Caco-2 (cell line): ENCODE measurements at regions of chr15 and their contacts with region 1.

Region 1: GRCh38 chr15:75182187-75183131 is 19.2 kb upstream of the C15orf39 start:
- DNase-seq: peak; percentile 60 to 82
- H3K4me3 ChIP-seq: no peak overlapping the region
- H3K4me3 Mint-ChIP-seq: peak overlapping the region; percentile 59
- H3K27ac Mint-ChIP-seq: peak overlapping the region; percentile 83
- H3K4me1 ChIP-seq: peaks cover 59% of the 10 kb centered on the region
- H3K4me1 Mint-ChIP-seq: peaks cover 42% of the 10 kb centered on the region
- H3K27me3 ChIP-seq: no peaks in the 10 kb centered on the region
- H3K27me3 Mint-ChIP-seq: no peaks in the 10 kb centered on the region
- CTCF ChIP-seq: peak; percentile 23 to 40

Region 2: GRCh38 chr15:75023181-75023871 is 159.1 kb before region 1 on chr15 and contains the start of gene PPCDC:
- CTCF ChIA-PET with region 1: no interaction called
- POLR2A ChIA-PET with region 1: interaction called, 16 read pairs
- intact Hi-C with region 1: no loop called
- DNase-seq: peak; percentile 96 to 97
- H3K4me3 ChIP-seq: peak within 1 kb of the TSS; percentile 94
- H3K4me3 Mint-ChIP-seq: peak within 1 kb of the TSS; percentile 97
- H3K27ac Mint-ChIP-seq: peak within 1 kb of the TSS; percentile 99
- H3K4me1 ChIP-seq: no peaks in the 10 kb centered on the region
- H3K4me1 Mint-ChIP-seq: no peaks in the 10 kb centered on the region
- H3K27me3 ChIP-seq: no peaks in the 10 kb centered on the region
- H3K27me3 Mint-ChIP-seq: no peaks in the 10 kb centered on the region
- CTCF ChIP-seq: no peak
- total RNA-seq, gene PPCDC: 14.7 and 18.1 TPM in 2 replicates

Region 3: DNA sequence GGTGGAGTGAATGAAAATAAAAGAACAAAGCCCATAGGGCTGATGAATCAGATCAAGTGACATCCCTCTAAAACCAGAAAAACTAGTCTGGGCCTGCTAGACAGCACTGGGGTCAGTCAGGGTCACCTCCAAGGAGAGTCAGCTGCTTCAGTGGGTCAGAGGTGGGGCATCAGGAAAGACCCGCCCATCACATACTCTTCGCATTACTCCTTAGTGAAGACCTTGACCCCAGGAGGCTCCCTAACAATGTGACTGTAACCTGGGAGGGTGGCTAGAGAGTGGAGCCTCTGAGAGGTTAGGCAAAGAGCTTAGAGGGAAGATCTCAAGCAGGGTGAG is 146.2 kb before region 1 on chr15:
- CTCF ChIA-PET with region 1: no interaction called
- POLR2A ChIA-PET with region 1: no interaction called
- intact Hi-C with region 1: loop called (anchors 1 kb)
- DNase-seq: peak; percentile 93 to 96
- H3K4me3 ChIP-seq: no peak overlapping the region
- H3K4me3 Mint-ChIP-seq: peak overlapping the region; percentile 25
- H3K27ac Mint-ChIP-seq: peak overlapping the region; percentile 75
- H3K4me1 ChIP-seq: peaks cover 66% of the 10 kb centered on the region
- H3K4me1 Mint-ChIP-seq: peaks cover 50% of the 10 kb centered on the region
- H3K27me3 ChIP-seq: no peaks in the 10 kb centered on the region
- H3K27me3 Mint-ChIP-seq: no peaks in the 10 kb centered on the region
- CTCF ChIP-seq: no peak

Region 4: GRCh38 chr15:75104804-75105535 is 77.5 kb before region 1 on chr15:
- CTCF ChIA-PET with region 1: no interaction called
- POLR2A ChIA-PET with region 1: no interaction called
- intact Hi-C with region 1: no loop called
- DNase-seq: peak in 1 of 2 experiments; percentile 29
- H3K4me3 ChIP-seq: no peak overlapping the region
- H3K4me3 Mint-ChIP-seq: no peak overlapping the region
- H3K27ac Mint-ChIP-seq: peak overlapping the region; percentile 47
- H3K4me1 ChIP-seq: peaks cover 9% of the 10 kb centered on the region
- H3K4me1 Mint-ChIP-seq: peaks cover 14% of the 10 kb centered on the region
- H3K27me3 ChIP-seq: no peaks in the 10 kb centered on the region
- H3K27me3 Mint-ChIP-seq: no peaks in the 10 kb centered on the region
- CTCF ChIP-seq: no peak

Region 5: GRCh38 chr15:75138016-75138999 is 44.2 kb before region 1 on chr15:
- CTCF ChIA-PET with region 1: no interaction called
- POLR2A ChIA-PET with region 1: interaction called, 6 read pairs
- intact Hi-C with region 1: loop called (anchors 2 kb)
- DNase-seq: peak; percentile 40 to 67
- H3K4me3 ChIP-seq: no peak overlapping the region
- H3K4me3 Mint-ChIP-seq: no peak overlapping the region
- H3K27ac Mint-ChIP-seq: peak overlapping the region; percentile 92
- H3K4me1 ChIP-seq: peaks cover 43% of the 10 kb centered on the region
- H3K4me1 Mint-ChIP-seq: peaks cover 30% of the 10 kb centered on the region
- H3K27me3 ChIP-seq: no peaks in the 10 kb centered on the region
- H3K27me3 Mint-ChIP-seq: no peaks in the 10 kb centered on the region
- CTCF ChIP-seq: no peak

Region 6: GRCh38 chr15:75161917-75162414 is 20.5 kb before region 1 on chr15:
- CTCF ChIA-PET with region 1: interaction called, 4 read pairs
- POLR2A ChIA-PET with region 1: no interaction called
- intact Hi-C with region 1: loop called (anchors 1 kb)
- DNase-seq: peak; percentile 75 to 79
- H3K4me3 ChIP-seq: no peak overlapping the region
- H3K4me3 Mint-ChIP-seq: peak overlapping the region; percentile 44
- H3K27ac Mint-ChIP-seq: peak overlapping the region; percentile 64
- H3K4me1 ChIP-seq: peaks cover 42% of the 10 kb centered on the region
- H3K4me1 Mint-ChIP-seq: no peaks in the 10 kb centered on the region
- H3K27me3 ChIP-seq: no peaks in the 10 kb centered on the region
- H3K27me3 Mint-ChIP-seq: no peaks in the 10 kb centered on the region
- CTCF ChIP-seq: no peak